WTC11 (cell line): ENCODE measurements at regions of chr1 and their contacts with region 1.

Region 1: DNA sequence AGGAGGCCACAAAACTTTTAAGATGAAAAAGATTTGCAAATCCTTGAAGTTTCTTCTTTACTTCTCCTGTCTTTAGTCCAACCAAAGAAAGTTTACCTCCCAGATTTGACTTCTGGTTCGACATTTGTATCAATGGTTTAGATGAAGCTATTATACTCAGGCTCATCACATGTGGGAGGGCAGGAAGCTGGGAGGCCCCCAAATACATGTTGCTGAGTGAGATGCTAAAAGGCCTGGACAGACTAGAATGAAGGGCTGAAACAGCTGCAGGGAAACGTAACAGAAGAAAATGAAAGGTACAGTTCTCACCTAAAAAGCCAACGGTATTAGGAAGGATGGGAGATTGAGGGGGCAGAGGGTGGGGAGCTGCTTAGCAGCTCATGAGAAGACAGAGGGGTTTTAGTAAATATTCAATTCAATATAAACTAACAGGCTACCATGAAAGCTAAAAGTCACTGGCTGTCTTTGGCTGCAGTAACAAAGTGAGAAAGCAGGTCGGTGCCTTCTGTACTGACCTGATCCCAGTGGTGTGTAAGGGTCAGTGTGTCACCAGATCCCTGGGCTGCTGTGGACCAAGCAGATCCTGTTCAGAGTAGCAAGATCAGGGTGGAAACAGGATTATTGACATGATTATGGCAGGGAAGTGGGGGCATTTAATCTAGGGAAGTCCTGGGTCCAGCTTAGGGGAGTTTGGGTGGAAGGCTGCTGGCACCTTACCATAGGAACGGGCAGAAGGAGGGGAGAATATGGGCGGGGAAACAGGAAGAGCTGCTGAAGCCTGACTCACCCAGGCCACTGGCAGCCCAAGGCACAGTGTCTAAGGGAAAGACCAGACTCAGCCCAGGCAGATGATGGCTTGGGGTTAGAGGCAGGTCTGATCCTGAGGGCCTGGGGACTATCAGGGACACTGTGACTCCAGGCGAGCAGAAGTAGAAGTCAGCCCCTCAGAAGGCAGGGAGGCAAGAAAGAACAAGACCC is 60.4 kb downstream of the KCNN3 start:
- DNase-seq: no peak
- ATAC-seq: no peak
- H3K4me3 Mint-ChIP-seq: no peak overlapping the region
- H3K27ac Mint-ChIP-seq: peak overlapping the region; percentile 31
- H3K4me1 Mint-ChIP-seq: peaks cover 43% of the 10 kb centered on the region
- H3K27me3 Mint-ChIP-seq: no peaks in the 10 kb centered on the region; the same call in 1 of the 2 replicates
- CTCF ChIP-seq: no peak

Region 2: DNA sequence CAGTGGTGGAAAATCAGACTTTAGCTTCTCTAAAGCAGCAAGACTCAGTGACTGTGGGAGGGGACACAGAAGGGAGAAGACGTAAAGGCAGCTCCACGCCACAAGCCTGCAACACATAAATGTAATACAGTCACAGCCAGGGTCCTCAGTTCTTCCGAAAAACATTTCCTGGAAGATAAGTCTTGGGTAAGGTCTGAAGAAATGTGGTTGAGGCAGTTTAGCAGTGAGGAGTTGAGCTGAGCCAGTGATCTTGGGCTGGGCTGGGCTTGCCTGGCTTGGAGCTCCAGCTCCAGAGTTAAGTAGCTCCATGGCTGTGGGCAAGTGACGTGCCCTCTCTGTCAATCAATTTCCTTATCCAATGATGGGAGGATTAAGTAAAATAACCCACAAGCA is 73.9 kb before region 1 on chr1:
- CTCF ChIA-PET with region 1: no interaction called
- POLR2A ChIA-PET with region 1: no interaction called
- DNase-seq: no peak
- ATAC-seq: no peak
- H3K4me3 Mint-ChIP-seq: no peak overlapping the region
- H3K27ac Mint-ChIP-seq: peak overlapping the region; percentile 69
- H3K4me1 Mint-ChIP-seq: peaks cover 8% of the 10 kb centered on the region
- H3K27me3 Mint-ChIP-seq: no peaks in the 10 kb centered on the region
- CTCF ChIP-seq: no peak

Region 3: GRCh38 chr1:154784924-154785531 is 24.7 kb before region 1 on chr1:
- CTCF ChIA-PET with region 1: no interaction called
- POLR2A ChIA-PET with region 1: no interaction called
- DNase-seq: no peak
- ATAC-seq: peak; percentile 61
- H3K4me3 Mint-ChIP-seq: no peak overlapping the region
- H3K27ac Mint-ChIP-seq: peak overlapping the region; percentile 10; the same call in 1 of the 2 replicates
- H3K4me1 Mint-ChIP-seq: peaks cover 10% of the 10 kb centered on the region
- H3K27me3 Mint-ChIP-seq: no peaks in the 10 kb centered on the region
- CTCF ChIP-seq: no peak

Region 4: GRCh38 chr1:154819628-154820590 is 10.2 kb after region 1 on chr1:
- CTCF ChIA-PET with region 1: interaction called, 24 read pairs
- POLR2A ChIA-PET with region 1: no interaction called
- DNase-seq: peak; percentile 66
- ATAC-seq: peak; percentile 97
- H3K4me3 Mint-ChIP-seq: no peak overlapping the region
- H3K27ac Mint-ChIP-seq: no peak overlapping the region
- H3K4me1 Mint-ChIP-seq: peaks cover 13% of the 10 kb centered on the region
- H3K27me3 Mint-ChIP-seq: no peaks in the 10 kb centered on the region
- CTCF ChIP-seq: peak; percentile 63

Region 5: DNA sequence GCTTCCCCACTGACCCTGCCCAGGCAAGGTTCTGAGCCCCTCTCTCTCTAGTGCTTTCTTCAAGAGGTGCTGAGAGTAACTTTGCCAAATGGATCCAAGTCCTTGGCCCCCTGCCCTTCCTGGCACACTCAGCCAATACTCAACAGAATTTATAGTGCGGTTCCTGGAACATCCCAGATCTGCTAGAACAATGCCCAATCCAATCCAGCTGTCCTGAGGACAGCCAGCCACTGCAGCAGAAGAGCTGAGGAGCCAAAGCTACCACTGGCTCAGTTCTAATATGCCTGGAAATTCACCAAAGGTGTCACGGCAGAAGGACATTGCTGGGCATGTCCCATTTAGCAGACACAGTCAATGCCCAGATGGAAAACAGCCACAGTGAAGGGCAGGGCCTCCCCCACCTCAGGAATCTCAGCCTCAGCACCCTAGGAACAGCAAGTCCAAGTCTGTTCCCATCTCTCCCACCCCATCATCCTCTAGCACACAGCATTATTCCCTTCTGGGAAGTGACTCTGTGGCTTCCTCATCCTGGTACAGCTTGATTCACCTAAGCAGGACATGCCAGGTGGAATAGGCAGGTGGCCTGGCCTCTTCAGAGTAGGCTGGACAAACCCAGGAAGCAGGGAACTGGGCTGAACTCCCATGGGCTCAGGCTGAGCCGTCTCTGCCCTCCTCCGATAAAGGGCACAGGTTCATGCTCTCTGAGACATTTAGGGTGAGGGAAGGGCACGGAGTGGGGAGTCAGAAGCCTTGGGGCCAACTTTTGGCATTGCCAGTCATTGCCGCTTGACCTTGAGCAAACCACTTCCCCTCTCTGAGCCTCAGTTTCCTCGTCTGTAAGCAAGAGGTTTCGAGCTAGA is 102.2 kb after region 1 on chr1:
- CTCF ChIA-PET with region 1: no interaction called
- POLR2A ChIA-PET with region 1: no interaction called
- DNase-seq: no peak
- ATAC-seq: no peak
- H3K4me3 Mint-ChIP-seq: no peak overlapping the region
- H3K27ac Mint-ChIP-seq: no peak overlapping the region
- H3K4me1 Mint-ChIP-seq: 0 out of 2 replicates have a peak, but pooled peaks cover 3% of the 10 kb centered on the region
- H3K27me3 Mint-ChIP-seq: peaks cover 7% of the 10 kb centered on the region
- CTCF ChIP-seq: no peak

Region 6: DNA sequence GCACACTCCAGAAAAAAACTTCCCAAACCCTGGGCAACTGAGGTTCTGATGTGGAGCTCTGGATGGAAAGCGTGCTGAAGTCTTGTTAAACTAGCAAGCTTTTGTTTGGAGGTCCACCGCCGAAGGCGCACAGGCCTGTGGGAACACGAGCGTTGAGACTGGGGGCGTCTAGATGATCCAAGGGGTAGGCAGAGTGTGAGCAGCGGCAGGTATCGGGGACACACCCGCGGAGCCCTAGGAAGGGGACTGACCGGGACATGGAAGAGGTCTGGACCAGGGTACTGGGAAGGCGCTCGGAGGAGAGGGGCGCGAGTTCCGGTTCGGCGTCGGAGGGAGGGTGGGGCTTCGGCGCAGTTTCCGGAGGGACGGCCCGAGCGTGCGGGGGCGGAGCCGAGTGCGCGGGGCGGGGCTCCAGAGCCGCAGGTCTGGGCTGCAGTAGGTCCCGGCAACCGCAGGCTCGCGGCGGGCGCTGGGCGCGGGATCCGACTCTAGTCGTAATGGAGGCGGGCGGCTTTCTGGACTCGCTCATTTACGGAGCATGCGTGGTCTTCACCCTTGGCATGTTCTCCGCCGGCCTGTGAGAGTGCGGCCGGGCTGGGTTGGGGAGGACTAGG is 325.8 kb after region 1 on chr1 and contains the start of gene SLC50A1:
- CTCF ChIA-PET with region 1: no interaction called
- POLR2A ChIA-PET with region 1: interaction called, 11 read pairs
- DNase-seq: peak; percentile 97
- ATAC-seq: peak; percentile 87
- H3K4me3 Mint-ChIP-seq: peak within 1 kb of the TSS; percentile 96
- H3K27ac Mint-ChIP-seq: peak within 1 kb of the TSS; percentile 96
- H3K4me1 Mint-ChIP-seq: peaks cover 21% of the 10 kb centered on the region
- H3K27me3 Mint-ChIP-seq: peaks cover under 1% of the 10 kb centered on the region; the same call in 1 of the 2 replicates
- CTCF ChIP-seq: no peak
- total RNA-seq, gene SLC50A1: 39.0 to 47.8 TPM (median 46.0 TPM) in 3 replicates